Head of caudate nucleus (tissue), 42 donors: ENCODE measurements at regions of chr3 and their contacts with region 1.

Region 1: DNA sequence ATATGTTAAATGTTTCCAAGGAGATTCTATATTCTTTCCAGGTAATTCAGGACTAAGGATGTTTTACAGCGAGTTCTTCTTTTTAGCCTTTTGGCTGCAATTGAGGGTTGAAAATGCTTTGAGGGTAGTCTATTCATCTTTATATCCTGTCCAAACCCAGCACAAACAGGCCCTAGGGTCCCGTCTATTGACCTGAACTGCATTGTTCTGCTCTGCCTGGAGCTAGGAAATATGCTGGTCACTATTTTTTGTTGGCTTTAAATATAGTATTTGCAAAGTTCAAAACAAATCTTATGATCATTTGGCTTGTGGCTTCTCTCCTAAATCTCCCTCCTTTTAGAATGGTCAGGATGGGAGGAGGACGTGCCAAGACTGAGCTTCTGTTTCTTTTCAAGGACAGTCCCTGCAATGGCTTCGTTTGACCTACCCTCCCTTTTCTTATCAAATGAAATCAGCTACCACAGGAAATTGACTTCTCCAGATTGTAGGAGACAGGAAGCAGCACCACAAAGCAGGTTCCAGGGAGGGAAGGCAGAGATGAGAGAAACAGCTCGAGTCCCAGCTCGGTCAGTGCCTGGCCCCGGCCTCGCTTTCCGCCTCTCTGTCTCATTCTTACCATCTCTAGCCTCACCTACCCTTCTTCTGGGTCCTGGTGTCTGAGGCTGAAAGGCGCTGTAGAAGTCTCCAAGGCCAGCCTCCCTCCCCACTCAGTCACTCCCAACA is 27.6 kb upstream of the NRROS start:
- DNase-seq: peak in 1 of 42 donors; percentile 12

Region 2: DNA sequence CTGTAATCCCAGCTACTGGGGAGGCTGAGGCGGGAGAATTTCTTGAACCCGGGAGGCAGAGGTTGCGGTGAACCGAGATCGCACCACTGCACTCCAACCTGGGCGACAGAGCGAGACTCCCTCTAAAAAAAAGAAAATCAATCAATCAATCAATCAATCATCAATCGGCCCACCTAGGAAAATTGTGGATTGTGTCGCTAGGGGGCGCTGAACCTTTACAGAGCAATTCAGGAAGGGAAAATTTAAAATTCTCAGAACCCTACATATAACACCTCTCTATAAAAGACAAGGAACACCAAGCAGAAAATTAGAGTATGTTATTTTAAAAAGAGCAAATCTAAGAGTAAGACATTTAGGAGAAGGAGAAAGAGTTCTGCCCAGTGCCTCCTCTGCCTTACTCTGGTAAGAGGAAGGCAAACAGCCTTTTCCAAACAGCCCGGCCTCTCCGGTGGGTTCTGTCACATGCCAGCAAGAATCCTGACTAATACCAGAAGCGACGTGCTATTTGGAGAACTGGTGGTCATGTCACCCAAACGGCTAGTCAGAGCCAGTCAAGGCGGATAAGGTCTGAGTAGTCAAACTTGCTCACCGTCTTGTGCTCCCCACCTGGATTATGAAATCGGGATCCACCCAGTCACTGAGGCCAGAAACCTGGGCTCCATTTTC is 74.5 kb before region 1 on chr3:
- intact Hi-C with region 1: no loop called
- DNase-seq: peak in 36 of 42 donors; percentile 5 to 82 (median 47)

Region 3: GRCh38 chr3:196684548-196685407 is 72.9 kb after region 1 on chr3:
- intact Hi-C with region 1: loop called (anchors 5 kb)
- DNase-seq: peak; percentile 20 to 87 (median 66)